Lower leg skin (tissue), 4 donors: ENCODE measurements at regions of chr1 and their contacts with region 1.

Region 1: DNA sequence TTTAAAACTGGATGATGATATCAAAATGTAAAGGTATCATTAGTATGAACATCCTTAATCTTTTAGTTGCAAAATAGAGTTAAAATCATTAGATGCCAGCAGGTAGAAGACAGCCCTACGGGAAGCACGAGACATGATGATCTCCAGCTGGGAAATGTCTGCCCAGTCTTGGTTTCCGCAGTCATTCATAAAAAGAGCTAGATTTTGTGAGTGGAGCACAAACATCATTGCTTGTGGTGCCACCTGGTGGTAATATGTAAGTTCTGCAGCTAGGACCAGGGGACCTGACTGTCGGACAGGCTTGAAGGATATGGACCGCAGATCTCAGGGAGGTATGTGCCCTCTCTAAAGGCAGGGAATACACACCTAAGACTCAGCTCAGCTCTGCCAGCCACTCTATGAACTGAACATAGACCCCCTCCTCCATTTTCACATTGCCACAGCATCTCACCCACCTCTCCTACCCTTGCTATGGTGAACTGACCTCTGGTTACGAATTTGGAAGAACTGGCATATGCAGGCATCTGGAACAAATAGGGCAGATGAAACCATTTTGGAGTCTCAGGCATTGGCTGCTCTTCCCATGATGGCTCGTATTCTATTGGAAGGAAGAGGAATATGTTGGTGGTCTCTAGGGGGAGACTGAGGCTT is 9.2 kb downstream of the FCMR start:
- DNase-seq: peak; percentile 74 to 90
- H3K4me3 ChIP-seq: no peak overlapping the region
- CTCF ChIP-seq: peak in 1 of 3 donors; percentile 63
- POLR2A ChIP-seq: no peak

Region 2: GRCh38 chr1:206489980-206490770 is 422.4 kb before region 1 on chr1:
- intact Hi-C with region 1: loop called (anchors 10 kb)
- DNase-seq: peak; percentile 62 to 95
- H3K4me3 ChIP-seq: no peak overlapping the region
- CTCF ChIP-seq: peak in 1 of 3 donors; percentile 90
- POLR2A ChIP-seq: no peak

Region 3: DNA sequence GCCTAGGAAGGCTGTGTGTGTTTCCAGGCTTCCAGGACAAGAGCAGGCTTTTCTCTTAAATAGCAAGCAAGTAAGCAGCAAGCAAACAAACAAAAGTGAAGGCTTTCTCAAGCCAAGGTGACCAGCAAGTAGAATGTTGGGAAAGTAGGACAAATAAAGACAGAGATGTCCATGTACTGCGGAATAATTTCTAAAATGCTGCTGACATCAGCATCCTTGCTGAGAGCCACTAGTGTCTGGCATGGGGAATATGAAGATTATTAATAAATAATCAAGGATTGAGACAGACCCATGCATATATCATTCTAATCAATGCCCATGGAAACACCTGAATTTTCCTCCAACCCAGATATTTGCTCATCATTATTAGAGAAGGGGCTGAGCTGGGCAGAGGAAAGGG is 283.7 kb before region 1 on chr1:
- intact Hi-C with region 1: loop called (anchors 10 kb)
- DNase-seq: no peak
- H3K4me3 ChIP-seq: no peak overlapping the region
- CTCF ChIP-seq: no peak
- POLR2A ChIP-seq: no peak

Region 4: DNA sequence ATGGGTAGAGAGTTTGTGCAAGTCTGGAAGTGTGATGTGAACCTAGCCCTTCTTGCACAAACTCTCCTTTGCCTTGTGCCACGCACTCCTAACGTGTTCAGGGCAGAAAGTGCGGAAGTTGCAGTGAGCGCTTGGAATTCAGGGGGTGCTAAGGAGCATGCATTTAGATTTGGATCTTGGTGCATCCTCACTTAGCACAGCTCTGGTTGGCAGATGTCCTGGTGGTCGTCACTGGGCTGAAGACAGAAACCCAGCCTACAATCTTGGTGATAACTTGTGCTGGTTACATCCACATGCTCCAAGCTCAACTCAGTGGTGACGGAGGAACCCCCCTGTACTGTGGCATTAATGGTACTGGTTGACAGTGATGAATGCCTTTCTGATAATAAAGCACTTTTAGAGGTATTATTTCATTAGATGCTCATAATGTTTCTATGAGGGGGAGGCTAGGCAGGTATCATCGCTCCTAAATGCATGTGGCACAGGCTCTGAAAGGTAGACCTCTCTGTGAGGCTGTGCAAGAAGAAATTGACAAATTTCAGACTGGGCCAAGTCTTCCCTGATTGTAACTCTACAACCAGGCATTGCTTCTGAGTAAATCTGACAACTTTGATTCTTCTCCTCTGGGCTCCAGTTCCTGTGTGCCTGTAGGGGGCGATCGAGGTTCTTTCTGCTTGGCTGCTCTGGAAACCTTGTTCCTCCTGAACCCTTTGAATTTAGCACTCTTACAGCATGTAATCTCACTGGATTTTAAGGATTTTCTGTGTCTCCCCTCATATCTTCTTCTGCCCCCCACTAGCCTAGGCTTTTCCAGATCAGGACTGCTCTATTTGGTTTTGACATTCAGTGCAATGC is 187.2 kb before region 1 on chr1:
- intact Hi-C with region 1: loop called (anchors 10 kb)
- DNase-seq: no peak
- H3K4me3 ChIP-seq: no peak overlapping the region
- CTCF ChIP-seq: no peak
- POLR2A ChIP-seq: no peak